ENCODE measurements at regions of chr2 and their contacts with region 1.

Region 1: GRCh38 chr2:96265840-96266679 is at the starts of genes CIAO1 and TMEM127:
- DNase-seq: peak; percentile 98
- ATAC-seq: peak; percentile 90
- H3K4me3 ChIP-seq: peak within 1 kb of the TSS; percentile 95 to 97 (median 96)
- H3K27ac ChIP-seq: peak within 1 kb of the TSS; percentile 83
- H3K4me1 ChIP-seq: peaks cover 47% of the 10 kb centered on the region
- H3K27me3 ChIP-seq: no peaks in the 10 kb centered on the region; a peak in 1 of 5 replicates
- CTCF ChIP-seq: peak; percentile 58
- EP300 ChIP-seq: peak in 1 of 2 experiments; percentile 65; a peak in 2 of 4 replicates
- POLR2A ChIP-seq: peak in 1 of 2 experiments; percentile 84; a peak in 2 of 4 replicates
- RAD21 ChIP-seq: peak; percentile 67; the same call in 1 of the 2 replicates
- total RNA-seq, gene CIAO1: 99.3 and 118 TPM in 2 replicates
- total RNA-seq, gene TMEM127: 15.7 and 21.5 TPM in 2 replicates

Region 2: DNA sequence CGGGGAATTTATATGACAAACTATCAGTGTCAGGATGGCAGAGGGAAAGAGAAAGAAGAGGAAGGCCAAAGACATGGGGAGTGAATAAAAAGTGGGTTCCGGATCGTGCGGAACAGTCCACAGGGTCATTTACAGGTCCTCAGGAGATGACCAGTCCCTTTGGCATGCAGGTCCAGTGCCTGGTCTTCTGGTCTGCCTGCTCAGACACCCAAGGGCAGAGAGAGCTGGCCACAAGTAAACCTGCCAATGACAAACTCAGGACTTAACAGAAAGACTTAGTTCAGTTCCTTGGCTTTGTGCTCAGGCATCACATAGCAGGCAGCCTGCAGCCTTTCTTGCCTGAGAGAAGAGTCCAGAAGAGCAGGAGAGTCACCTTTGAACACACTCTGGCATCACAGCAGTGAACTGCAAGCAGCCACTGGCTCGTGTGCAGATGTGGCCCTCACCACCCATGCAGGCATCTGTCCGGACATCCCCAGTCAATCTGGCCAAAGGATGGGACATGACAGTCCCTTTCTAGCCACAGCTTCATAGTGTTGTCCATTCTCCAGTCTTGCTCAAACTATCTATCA is 14.3 kb before region 1 on chr2:
- CTCF ChIA-PET with region 1: interaction called, 19 read pairs
- POLR2A ChIA-PET with region 1: interaction called, 63 read pairs
- in situ Hi-C with region 1: no loop called
- intact Hi-C with region 1: loop called (anchors 1 kb)
- DNase-seq: peak; percentile 84
- ATAC-seq: peak; percentile 79
- H3K4me3 ChIP-seq: no peak overlapping the region
- H3K27ac ChIP-seq: no peak overlapping the region
- H3K4me1 ChIP-seq: peaks cover 25% of the 10 kb centered on the region
- H3K27me3 ChIP-seq: no peaks in the 10 kb centered on the region
- CTCF ChIP-seq: 0 out of 2 replicates have a peak, but pooled peaks have one; percentile 17
- EP300 ChIP-seq: 0 out of 4 replicates have a peak, but pooled peaks of 1 of the 2 experiments have one; percentile 18
- POLR2A ChIP-seq: 0 out of 4 replicates have a peak, but pooled peaks of 1 of the 2 experiments have one; percentile 17
- RAD21 ChIP-seq: peak; percentile 52; the same call in 1 of the 2 replicates

Region 3: GRCh38 chr2:96336104-96336775 is 70.2 kb after region 1 on chr2:
- CTCF ChIA-PET with region 1: no interaction called
- POLR2A ChIA-PET with region 1: interaction called, 16 read pairs
- in situ Hi-C with region 1: no loop called
- intact Hi-C with region 1: no loop called
- DNase-seq: no peak
- ATAC-seq: peak; percentile 28
- H3K4me3 ChIP-seq: peak overlapping the region; percentile 74 to 85 (median 81)
- H3K27ac ChIP-seq: peak overlapping the region; percentile 84
- H3K4me1 ChIP-seq: peaks cover 32% of the 10 kb centered on the region
- H3K27me3 ChIP-seq: no peaks in the 10 kb centered on the region; a peak in 1 of 5 replicates
- CTCF ChIP-seq: no peak
- EP300 ChIP-seq: no peak
- POLR2A ChIP-seq: peak; percentile 25 to 73
- RAD21 ChIP-seq: no peak

Measured in HepG2 (cell line).